Gastrocnemius medialis (tissue), 4 donors: ENCODE measurements at regions of chr19 and their contacts with region 1.

Region 1: GRCh38 chr19:46513461-46514236 is 18.0 kb upstream of the PNMA8B start:
- DNase-seq: peak; percentile 34 to 40
- ATAC-seq: peak; percentile 47 to 73
- H3K4me3 ChIP-seq: no peak overlapping the region
- H3K27ac ChIP-seq: no peak overlapping the region
- H3K4me1 ChIP-seq: peaks cover 0 to 3% of the 10 kb centered on the region in 2 donors
- H3K27me3 ChIP-seq: peaks cover 3 to 10% (median 7%) of the 10 kb centered on the region in 3 donors
- CTCF ChIP-seq: peak; percentile 66 to 88 (median 85)
- POLR2A ChIP-seq: no peak

Region 2: DNA sequence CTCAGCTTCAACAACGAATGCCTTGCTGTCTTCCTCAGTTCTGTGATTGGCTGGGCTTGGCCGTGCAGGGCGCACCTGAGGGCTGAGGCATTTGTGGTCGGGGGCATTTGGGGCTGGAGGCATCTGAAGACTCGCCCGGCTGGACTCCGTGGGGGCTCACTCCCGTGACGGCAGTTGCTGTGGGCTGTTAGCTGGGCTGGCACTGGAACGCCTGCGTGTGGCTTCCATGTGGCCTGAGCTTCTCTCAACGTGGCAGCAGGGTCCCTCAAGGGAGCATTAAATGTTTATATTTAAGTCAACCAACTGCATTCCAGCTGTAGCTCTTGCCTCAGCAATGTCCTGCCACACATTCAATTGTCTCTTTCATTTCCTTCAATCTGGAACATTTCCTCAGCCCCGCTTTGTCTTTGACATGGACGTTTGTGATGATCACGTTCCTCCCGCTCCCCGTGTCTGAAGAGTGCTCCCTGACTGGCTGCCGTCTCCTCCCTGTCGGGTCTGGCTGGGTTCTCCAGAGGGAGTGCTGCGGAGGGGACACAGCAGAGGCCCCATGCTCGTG is 121.3 kb before region 1 on chr19:
- in situ Hi-C with region 1: loop called in 1 of 4 experiments (anchors 10 kb)
- intact Hi-C with region 1: loop called (anchors 1 kb)
- DNase-seq: no peak
- ATAC-seq: no peak
- H3K4me3 ChIP-seq: no peak overlapping the region
- H3K27ac ChIP-seq: no peak overlapping the region
- H3K4me1 ChIP-seq: no peaks in the 10 kb centered on the region
- H3K27me3 ChIP-seq: no peaks in the 10 kb centered on the region
- CTCF ChIP-seq: no peak
- POLR2A ChIP-seq: no peak

Region 3: GRCh38 chr19:46404055-46404752 is 109.4 kb before region 1 on chr19:
- in situ Hi-C with region 1: loop called in 2 of 4 experiments (anchors 10 kb)
- intact Hi-C with region 1: no loop called
- DNase-seq: no peak
- ATAC-seq: peak in 1 of 2 donors; percentile 42
- H3K4me3 ChIP-seq: peak overlapping the region; percentile 8 to 41 (median 18)
- H3K27ac ChIP-seq: peak overlapping the region in 2 of 4 donors; percentile 19 to 34
- H3K4me1 ChIP-seq: peaks cover 0 to 4% of the 10 kb centered on the region in 2 donors
- H3K27me3 ChIP-seq: peaks cover 40 to 58% (median 47%) of the 10 kb centered on the region in 3 donors
- CTCF ChIP-seq: no peak
- POLR2A ChIP-seq: no peak